PC-3 (cell line): ENCODE measurements at regions of chr3 and their contacts with region 1.

Region 1: DNA sequence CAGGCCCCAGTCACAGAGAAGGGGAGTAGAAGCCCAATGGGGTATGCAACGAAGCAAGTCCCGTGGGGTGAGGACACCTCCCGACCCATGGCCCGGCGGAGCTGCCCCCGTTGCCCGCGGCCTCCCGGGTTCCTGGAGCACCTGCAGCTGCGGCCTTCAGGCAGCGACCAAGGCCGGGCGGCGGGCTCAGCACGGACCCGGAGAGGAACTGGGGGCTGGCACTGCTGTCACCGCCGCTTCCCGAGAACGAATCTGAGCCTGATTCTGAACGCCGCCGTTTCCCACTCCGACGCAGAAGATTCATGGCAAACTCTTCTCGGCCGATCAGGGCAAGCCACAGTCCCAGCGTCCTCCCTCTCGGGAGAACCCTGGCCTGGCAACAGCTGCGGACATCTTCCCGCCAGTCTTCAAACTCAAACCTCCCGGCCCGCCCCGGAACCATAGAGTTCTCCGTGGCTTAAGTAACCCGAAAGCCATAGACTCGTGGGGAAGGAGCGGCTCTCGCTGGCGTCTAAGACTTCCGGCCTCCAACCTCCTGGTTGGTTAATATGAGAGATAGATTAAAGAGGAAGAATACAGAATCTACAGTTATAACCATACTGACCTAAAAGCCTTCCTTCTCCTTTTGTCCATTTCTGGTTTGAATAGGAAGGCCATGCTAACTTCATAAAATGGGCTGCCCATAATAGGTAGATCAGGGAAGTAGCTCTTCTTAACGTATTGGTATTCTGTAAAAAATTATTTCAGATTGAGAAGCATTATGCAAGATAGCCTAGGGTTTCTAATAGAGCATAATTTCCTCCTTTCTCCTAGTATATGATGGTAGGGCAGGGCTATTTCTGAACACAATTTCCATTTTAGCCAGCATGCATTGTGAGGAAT is at the start of gene POLQ:
- DNase-seq: peak; percentile 97
- ATAC-seq: peak; percentile 92
- H3K4me3 ChIP-seq: peak within 1 kb of the TSS; percentile 84
- H3K27ac ChIP-seq: no peak within 1 kb of the TSS
- H3K4me1 ChIP-seq: peaks cover 8% of the 10 kb centered on the region
- H3K27me3 ChIP-seq: no peaks in the 10 kb centered on the region
- CTCF ChIP-seq: no peak
- total RNA-seq, gene POLQ: 9.6 and 22.2 TPM in 2 replicates

Region 2: DNA sequence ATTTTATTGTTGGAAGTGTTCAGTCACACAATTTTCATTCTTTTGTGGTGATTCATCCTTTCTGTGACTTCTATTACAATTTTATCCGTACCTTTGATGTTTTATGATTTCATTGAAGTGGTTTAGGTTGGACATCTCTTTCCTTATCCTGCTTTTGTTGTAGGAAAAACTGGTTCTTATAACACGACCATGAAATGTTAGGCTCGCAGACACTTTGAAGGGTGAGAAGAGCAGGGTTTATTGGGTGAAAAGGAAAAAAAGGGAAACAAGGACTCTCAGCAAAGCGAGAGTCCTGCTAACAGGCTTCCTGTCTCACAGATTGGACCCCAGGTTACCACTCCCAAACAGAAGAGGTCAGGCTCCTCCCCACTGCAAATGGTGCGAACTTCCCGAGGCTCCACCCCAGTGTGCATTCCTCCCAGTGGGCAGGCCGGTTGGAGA is 380.4 kb before region 1 on chr3:
- CTCF ChIA-PET with region 1: no interaction called
- POLR2A ChIA-PET with region 1: no interaction called
- intact Hi-C with region 1: no loop called
- DNase-seq: peak; percentile 66
- ATAC-seq: peak; percentile 48
- H3K4me3 ChIP-seq: no peak overlapping the region
- H3K27ac ChIP-seq: no peak overlapping the region
- H3K4me1 ChIP-seq: peaks cover 8% of the 10 kb centered on the region
- H3K27me3 ChIP-seq: no peaks in the 10 kb centered on the region
- CTCF ChIP-seq: no peak

Region 3: DNA sequence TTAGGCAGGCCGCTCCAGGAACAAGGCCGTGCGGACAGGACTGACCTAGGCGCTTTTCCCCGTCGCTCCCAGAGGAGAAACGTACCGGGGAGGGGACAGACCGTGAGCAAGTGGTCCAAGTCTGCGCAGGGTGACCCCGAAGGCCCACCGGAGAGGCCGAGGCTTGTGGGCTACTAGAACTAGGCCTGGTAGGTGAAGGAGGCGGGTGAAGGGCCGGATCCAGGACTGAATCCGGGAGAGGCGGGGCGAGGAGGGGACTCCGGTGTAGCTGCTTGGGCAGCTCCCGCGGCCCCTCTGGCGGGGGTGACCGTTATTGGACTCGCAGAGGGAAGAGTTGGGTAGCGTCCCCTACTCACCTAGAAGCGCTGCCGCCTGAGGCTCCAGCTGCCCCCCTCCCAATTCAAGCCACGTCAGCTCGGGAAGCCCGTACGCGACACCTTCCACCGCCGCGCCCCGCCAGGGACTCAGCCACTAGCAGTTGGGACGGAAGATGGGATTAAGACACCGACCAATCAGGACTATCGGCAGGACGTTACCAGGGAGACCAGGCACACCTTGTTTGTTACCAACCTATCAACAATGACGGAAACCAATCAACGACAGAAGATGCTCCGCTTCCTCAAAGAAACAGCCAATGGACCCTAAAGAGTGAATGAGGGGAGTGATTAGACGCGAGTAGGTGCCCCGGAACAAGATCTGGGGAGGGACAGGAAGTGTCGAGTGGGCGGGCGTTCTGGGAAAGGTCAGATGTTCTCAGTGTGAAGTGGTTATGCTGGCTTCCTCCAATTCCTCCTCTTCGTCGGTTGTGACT is 203.7 kb after region 1 on chr3 and contains the start of gene GOLGB1:
- CTCF ChIA-PET with region 1: no interaction called
- POLR2A ChIA-PET with region 1: no interaction called
- intact Hi-C with region 1: loop called (anchors 1 kb)
- DNase-seq: peak; percentile 100
- ATAC-seq: peak; percentile 94
- H3K4me3 ChIP-seq: peak within 1 kb of the TSS; percentile 86
- H3K27ac ChIP-seq: peak within 1 kb of the TSS; percentile 57
- H3K4me1 ChIP-seq: peaks cover 19% of the 10 kb centered on the region
- H3K27me3 ChIP-seq: no peaks in the 10 kb centered on the region
- CTCF ChIP-seq: no peak
- total RNA-seq, gene GOLGB1: 30.2 and 31.6 TPM in 2 replicates

Region 4: GRCh38 chr3:121855555-121855954 is 309.7 kb after region 1 on chr3:
- CTCF ChIA-PET with region 1: no interaction called
- POLR2A ChIA-PET with region 1: no interaction called
- intact Hi-C with region 1: loop called (anchors 5 kb)
- DNase-seq: peak; percentile 73
- ATAC-seq: peak; percentile 72
- H3K4me3 ChIP-seq: no peak overlapping the region
- H3K27ac ChIP-seq: no peak overlapping the region
- H3K4me1 ChIP-seq: no peaks in the 10 kb centered on the region
- H3K27me3 ChIP-seq: no peaks in the 10 kb centered on the region
- CTCF ChIP-seq: peak; percentile 84

Region 5: DNA sequence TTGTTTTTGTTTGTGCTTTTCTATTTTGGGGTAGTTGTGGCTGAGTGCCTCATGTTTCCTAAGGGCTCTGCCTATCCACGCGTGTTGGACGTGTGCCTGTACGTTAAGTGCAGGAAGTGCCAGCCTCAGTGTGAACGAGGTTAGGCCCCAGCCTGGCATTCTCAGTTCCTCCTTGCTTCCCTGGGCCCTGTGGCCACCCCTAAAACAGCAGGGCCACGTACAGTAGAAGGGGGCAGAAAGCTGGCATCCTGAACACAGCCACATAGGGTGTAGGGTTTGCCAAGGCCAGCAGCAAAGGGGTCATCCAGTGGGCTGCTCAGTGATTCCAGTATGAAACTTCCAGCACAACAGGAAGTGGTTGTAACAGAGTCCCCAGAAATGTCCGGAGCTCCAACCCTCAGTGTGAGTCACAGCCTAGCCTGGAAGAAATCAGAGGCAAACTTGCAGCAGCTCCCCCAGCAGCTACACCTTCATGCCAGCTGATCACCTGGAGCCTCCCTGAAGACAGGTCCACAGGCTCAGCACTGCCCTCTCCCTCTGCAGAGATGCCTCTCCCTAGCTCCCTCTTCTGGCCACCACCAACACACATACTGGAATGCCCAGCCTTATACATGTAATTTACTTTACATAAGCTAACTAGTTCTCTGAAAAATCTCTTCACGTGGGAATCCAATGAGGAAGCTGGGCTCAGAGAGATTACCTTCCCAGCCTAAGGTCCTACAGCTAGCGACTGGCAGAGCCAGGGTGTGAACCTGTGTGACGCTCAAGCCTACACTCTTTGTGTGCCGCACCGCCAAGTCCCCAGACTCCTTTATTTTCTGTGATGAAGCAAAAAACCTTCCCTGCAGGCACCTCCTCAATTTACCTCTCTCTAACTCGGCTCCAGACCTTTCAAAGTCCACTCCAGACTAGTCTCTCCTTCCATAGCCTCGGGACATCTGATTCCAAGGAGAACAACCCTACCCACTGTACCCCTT is 449.6 kb after region 1 on chr3:
- CTCF ChIA-PET with region 1: interaction called, 4 read pairs
- POLR2A ChIA-PET with region 1: no interaction called
- intact Hi-C with region 1: loop called (anchors 5 kb)
- DNase-seq: peak; percentile 98
- ATAC-seq: peak; percentile 92
- H3K4me3 ChIP-seq: 0 out of 2 replicates have a peak overlapping the region, but pooled peaks have one; percentile 12
- H3K27ac ChIP-seq: peak overlapping the region; percentile 96
- H3K4me1 ChIP-seq: peaks cover 52% of the 10 kb centered on the region
- H3K27me3 ChIP-seq: no peaks in the 10 kb centered on the region
- CTCF ChIP-seq: peak; percentile 97

Region 6: DNA sequence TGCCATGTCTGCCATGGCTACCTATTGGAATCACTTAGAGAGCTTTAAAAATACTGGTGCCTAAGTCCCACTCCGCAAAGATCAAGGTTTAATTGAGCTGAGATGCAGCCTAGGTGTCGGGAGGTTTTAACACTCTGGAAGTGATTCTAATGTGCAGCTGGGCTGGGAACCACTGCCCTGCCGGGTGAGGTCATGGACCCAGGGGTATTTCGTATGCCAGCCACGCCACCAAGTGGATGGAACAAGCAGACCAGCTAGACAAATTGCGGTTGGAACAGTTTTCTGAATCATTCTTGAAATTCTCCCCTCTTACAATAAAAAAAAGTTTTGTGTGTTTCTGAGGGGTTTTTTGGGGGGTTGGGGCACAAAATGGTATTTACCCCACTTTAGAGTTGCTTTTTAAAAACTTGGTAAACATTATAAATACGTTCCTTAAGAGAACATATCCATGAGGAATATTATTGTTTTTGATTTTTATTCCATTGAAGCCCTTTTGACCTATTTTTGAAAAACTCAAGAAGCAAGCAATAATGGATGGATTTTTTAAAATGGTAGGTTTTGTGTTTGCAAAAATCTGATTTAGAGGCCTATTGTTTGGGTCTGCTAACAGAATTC is 713.0 kb after region 1 on chr3:
- CTCF ChIA-PET with region 1: no interaction called
- POLR2A ChIA-PET with region 1: no interaction called
- intact Hi-C with region 1: loop called (anchors 1 kb)
- DNase-seq: peak; percentile 81
- ATAC-seq: peak; percentile 88
- H3K4me3 ChIP-seq: no peak overlapping the region
- H3K27ac ChIP-seq: no peak overlapping the region
- H3K4me1 ChIP-seq: no peaks in the 10 kb centered on the region
- H3K27me3 ChIP-seq: peaks cover 51% of the 10 kb centered on the region
- CTCF ChIP-seq: peak; percentile 94

Region 7: GRCh38 chr3:122356415-122356814 is 810.6 kb after region 1 on chr3:
- CTCF ChIA-PET with region 1: no interaction called
- POLR2A ChIA-PET with region 1: no interaction called
- intact Hi-C with region 1: loop called (anchors 2 kb)
- DNase-seq: peak; percentile 76
- ATAC-seq: peak; percentile 72
- H3K4me3 ChIP-seq: no peak overlapping the region
- H3K27ac ChIP-seq: no peak overlapping the region
- H3K4me1 ChIP-seq: peaks cover 10% of the 10 kb centered on the region
- H3K27me3 ChIP-seq: no peaks in the 10 kb centered on the region
- CTCF ChIP-seq: peak; percentile 90

Region 8: GRCh38 chr3:123028233-123028828 is 1482.5 kb after region 1 on chr3:
- CTCF ChIA-PET with region 1: no interaction called
- POLR2A ChIA-PET with region 1: no interaction called
- intact Hi-C with region 1: loop called (anchors 5 kb)
- DNase-seq: peak; percentile 80
- ATAC-seq: peak; percentile 52
- H3K4me3 ChIP-seq: peak overlapping the region; percentile 75
- H3K27ac ChIP-seq: no peak overlapping the region
- H3K4me1 ChIP-seq: peaks cover 17% of the 10 kb centered on the region
- H3K27me3 ChIP-seq: peaks cover 88% of the 10 kb centered on the region
- CTCF ChIP-seq: peak; percentile 78